Activated CD4-positive, alpha-beta T cell treated with anti-CD3 and anti-CD28 coated beads, Interleukin-2, amount 10 ng/mL, durations not matched to agents 7 days and 5 days (primary cell): ENCODE measurements at regions of chr20 and their contacts with region 1.

Region 1: GRCh38 chr20:50790651-50791277 is 4.1 kb upstream of the BCAS4 start:
- DNase-seq: peak; percentile 83
- H3K4me3 Mint-ChIP-seq: no peak overlapping the region
- H3K27ac Mint-ChIP-seq: peak overlapping the region; percentile 88
- H3K4me1 Mint-ChIP-seq: peaks cover 22% of the 10 kb centered on the region
- H3K27me3 Mint-ChIP-seq: peaks cover 2% of the 10 kb centered on the region

Region 2: DNA sequence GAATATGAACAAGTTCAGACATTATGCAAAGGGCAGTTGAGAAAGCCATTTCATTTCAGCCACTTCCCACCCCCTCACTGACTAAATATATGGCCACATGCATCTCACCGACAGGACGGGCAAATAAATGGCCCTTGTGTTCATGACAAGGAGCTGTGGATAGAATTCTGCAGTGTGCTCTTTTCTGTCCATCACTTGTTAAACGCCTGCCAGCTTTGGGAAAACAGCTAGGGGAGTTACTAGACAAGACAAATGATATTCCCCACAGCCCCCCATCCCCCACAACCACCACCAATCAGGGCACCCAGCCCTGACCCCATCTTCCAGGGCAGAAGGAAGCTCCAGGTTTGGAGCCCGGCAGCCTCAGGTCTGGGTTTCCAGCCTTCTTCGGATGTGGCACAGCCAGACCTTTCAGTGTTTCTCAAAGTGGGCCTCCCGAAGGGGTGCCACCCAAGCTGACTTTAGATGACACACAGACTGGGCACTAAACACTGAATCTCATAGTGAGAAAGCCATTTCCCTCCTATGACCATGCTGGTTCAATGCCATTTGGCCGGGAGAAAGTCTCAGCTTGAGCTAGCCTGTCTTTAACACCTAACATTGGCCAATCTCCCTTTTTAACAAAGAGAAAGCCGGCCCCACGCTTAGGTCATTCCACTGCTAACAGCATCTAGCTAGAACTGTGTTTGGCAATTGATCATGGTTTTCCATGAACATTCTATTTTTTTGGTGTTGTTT is 95.5 kb before region 1 on chr20:
- CTCF ChIA-PET with region 1: no interaction called
- POLR2A ChIA-PET with region 1: no interaction called
- DNase-seq: no peak
- H3K4me3 Mint-ChIP-seq: no peak overlapping the region
- H3K27ac Mint-ChIP-seq: no peak overlapping the region
- H3K4me1 Mint-ChIP-seq: peaks cover 7% of the 10 kb centered on the region
- H3K27me3 Mint-ChIP-seq: peaks cover 41% of the 10 kb centered on the region

Region 3: DNA sequence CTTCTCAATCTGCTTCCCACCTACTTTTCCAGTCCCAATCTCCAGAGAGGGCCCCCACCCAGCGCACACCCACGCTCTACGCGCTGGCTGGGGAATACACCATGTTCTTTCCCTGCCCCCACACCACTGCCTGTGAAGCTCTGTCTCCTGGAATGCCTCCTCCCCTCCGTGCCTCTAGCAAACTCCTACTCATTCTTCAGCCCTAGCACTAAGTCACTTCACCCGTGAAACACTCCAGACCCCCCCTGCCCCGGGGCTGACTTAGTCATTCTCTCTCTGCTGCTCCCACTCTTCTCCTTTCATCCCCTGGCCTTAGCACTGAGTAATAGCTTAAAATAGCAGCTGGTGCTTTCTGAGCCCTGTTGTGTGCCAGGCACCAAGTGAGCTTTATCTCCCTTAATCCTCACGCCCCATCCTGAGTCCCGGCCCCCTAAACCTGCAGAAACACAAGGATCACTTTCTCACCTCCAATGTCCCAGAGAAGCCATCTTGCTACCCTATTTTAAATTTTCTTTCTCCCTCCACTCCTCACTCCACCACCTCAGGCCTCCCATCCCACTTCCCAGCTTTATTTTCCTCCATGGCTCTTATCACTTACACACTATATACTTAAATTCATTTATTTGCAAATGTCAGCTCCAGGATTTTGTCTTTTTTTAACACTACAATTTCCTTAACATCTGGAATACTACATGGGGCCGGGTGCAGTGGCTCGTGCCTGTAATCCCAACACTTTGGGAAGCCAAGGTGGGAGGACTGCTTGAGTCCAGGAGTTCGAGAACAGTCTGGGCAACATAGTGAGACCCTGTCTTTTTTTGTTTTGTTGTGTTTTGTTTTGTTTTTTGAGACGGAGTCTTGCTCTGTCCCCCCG is 65.7 kb before region 1 on chr20:
- CTCF ChIA-PET with region 1: interaction called, 13 read pairs
- POLR2A ChIA-PET with region 1: no interaction called
- DNase-seq: no peak
- H3K4me3 Mint-ChIP-seq: no peak overlapping the region
- H3K27ac Mint-ChIP-seq: no peak overlapping the region
- H3K4me1 Mint-ChIP-seq: peaks cover under 1% of the 10 kb centered on the region
- H3K27me3 Mint-ChIP-seq: no peaks in the 10 kb centered on the region

Region 4: DNA sequence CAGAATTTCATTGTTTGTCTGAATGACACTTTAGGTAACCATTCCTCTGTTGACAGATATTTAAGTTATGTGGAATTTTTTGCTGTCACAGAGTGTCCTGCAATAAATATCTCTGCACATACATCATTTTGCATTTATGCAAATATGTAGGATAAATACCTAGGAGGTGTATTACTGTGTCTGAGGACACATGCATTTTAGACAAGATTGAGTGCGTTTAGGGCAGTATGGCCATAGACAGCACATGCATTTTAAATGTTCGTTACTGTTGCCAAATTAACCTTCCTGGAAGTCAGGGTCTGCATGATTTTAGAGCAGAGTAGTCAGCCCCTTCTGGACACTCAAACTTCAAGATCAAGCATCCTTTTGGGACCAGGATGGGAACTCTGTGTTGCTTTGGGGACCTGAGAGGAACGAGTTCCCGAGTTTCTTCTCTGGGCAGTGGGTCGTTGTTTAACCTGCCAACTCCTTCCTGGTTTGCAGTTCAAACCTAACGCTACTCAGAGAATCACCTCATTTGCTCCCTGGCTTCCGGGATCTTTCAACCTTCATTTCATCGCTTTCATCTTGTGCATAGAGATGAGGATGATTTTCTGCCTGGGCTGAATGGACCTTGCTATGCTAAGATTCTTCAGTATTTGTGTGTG is 13.8 kb after region 1 on chr20:
- CTCF ChIA-PET with region 1: interaction called, 12 read pairs
- POLR2A ChIA-PET with region 1: no interaction called
- DNase-seq: peak; percentile 58
- H3K4me3 Mint-ChIP-seq: peak overlapping the region; percentile 33
- H3K27ac Mint-ChIP-seq: peak overlapping the region; percentile 85
- H3K4me1 Mint-ChIP-seq: peaks cover 29% of the 10 kb centered on the region
- H3K27me3 Mint-ChIP-seq: no peaks in the 10 kb centered on the region

Region 5: GRCh38 chr20:50826121-50826520 is 35.4 kb after region 1 on chr20:
- CTCF ChIA-PET with region 1: interaction called, 12 read pairs
- POLR2A ChIA-PET with region 1: no interaction called
- DNase-seq: no peak
- H3K4me3 Mint-ChIP-seq: no peak overlapping the region
- H3K27ac Mint-ChIP-seq: no peak overlapping the region
- H3K4me1 Mint-ChIP-seq: peaks cover 4% of the 10 kb centered on the region
- H3K27me3 Mint-ChIP-seq: no peaks in the 10 kb centered on the region

Region 6: GRCh38 chr20:50919567-50919966 is 128.8 kb after region 1 on chr20:
- CTCF ChIA-PET with region 1: interaction called, 18 read pairs
- POLR2A ChIA-PET with region 1: no interaction called
- DNase-seq: no peak
- H3K4me3 Mint-ChIP-seq: no peak overlapping the region
- H3K27ac Mint-ChIP-seq: peak overlapping the region; percentile 1
- H3K4me1 Mint-ChIP-seq: peaks cover 49% of the 10 kb centered on the region
- H3K27me3 Mint-ChIP-seq: no peaks in the 10 kb centered on the region

Region 7: DNA sequence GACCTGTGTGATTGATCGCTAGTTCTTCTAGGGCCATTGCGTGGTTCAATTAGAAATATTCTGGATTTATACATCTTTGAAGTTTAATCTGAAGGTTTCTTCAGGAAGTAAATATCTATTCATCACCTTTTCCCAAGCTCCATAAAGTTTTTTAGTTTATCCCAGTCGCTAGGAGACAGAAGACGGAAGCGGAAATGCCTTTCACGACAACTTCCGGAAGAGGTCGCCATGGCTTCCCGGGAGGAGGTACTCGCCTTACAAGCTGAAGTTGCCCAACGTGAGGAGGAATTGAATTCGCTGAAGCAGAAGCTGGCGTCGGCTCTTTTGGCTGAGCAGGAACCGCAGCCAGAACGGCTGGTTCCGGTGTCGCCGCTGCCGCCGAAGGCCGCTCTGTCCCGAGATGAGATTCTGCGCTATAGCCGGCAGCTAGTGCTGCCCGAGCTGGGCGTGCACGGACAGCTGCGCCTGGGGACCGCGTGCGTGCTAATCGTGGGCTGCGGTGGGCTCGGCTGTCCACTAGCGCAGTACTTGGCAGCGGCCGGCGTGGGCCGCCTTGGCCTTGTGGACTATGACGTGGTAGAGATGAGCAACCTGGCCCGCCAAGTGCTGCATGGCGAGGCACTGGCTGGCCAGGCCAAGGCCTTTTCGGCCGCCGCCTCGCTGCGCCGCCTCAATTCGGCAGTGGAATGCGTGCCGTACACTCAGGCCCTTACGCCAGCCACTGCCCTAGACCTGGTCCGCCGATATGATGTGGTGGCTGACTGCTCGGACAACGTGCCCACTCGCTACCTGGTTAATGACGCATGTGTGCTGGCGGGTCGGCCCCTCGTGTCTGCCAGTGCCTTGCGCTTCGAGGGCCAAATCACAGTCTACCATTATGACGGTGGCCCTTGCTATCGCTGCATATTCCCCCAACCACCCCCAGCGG is 168.1 kb after region 1 on chr20 and contains the start of gene MOCS3:
- CTCF ChIA-PET with region 1: interaction called, 16 read pairs
- POLR2A ChIA-PET with region 1: interaction called, 5 read pairs
- DNase-seq: peak; percentile 91
- H3K4me3 Mint-ChIP-seq: peak within 1 kb of the TSS; percentile 87
- H3K27ac Mint-ChIP-seq: peak within 1 kb of the TSS; percentile 96
- H3K4me1 Mint-ChIP-seq: peaks cover 48% of the 10 kb centered on the region
- H3K27me3 Mint-ChIP-seq: no peaks in the 10 kb centered on the region
- total RNA-seq, gene MOCS3: 4.2 to 5.1 TPM